ENCODE measurements at regions of chr16 and their contacts with region 1.

Region 1: DNA sequence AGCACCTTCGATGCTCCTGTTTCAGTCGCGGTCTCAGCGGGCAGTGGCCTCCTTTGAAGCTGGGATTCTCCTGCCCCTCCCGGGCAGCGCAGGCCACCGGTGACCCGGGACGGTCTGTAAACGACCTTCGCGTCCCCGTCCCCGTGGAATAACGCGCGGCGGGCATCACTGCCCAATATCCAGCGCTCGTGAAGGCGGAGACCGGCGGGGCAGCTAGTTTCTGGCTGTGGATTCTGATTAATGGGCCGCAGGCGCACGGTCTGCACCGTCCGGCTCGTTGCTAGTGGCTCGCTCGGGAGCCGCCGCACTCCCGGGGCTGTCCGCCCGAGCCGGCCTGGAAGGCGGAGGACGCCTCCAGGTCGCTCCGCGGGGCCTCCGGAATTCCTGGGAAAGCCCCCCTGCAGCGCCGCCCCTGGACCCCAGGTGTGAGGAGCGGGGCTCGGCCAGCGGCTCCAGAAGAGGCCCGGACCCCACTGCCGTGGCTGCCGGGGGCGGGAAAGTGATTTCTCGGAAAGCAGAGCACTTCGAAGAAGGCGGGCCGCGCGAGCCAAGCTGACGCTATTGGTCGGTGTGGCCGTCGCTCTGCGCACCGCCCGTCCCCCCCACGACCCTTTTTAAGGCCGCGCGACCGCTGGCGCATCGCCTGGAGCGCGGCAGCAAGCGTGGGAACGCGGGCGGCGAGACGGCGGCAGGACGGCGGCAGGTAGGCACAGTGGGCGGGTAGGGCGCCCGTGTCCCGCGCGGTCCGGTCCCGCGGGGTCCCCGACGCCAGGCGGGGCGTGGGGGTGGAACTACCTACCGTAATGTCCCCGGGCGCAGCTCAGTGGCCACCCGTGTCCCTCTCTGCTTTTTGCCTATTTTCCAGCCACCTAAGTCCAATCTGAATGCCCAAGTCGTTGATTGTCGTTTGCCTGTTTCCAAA is at the start of gene IRF8:
- DNase-seq: peak; percentile 76 to 83 (median 81)
- H3K4me3 ChIP-seq: peak within 1 kb of the TSS; percentile 72 to 98 (median 97)
- H3K4me3 Mint-ChIP-seq: peak within 1 kb of the TSS; percentile 91 to 96
- H3K27ac ChIP-seq: peak within 1 kb of the TSS; percentile 82 to 89
- H3K27ac Mint-ChIP-seq: peak within 1 kb of the TSS; percentile 92 to 97 (median 95)
- H3K4me1 ChIP-seq: peaks cover 50 to 59% of the 10 kb centered on the region in 2 donors
- H3K4me1 Mint-ChIP-seq: peaks cover 60% of the 10 kb centered on the region
- H3K27me3 ChIP-seq: no peaks in the 10 kb centered on the region
- H3K27me3 Mint-ChIP-seq: no peaks in the 10 kb centered on the region
- CTCF ChIP-seq: no peak
- polyA plus RNA-seq, gene IRF8: 157 to 187 (median 184) TPM

Region 2: GRCh38 chr16:85821441-85822135 is 77.2 kb before region 1 on chr16:
- intact Hi-C with region 1: loop called (anchors 5 kb)
- DNase-seq: peak; percentile 81 to 97 (median 85)
- H3K4me3 ChIP-seq: no peak overlapping the region
- H3K4me3 Mint-ChIP-seq: no peak overlapping the region
- H3K27ac ChIP-seq: no peak overlapping the region
- H3K27ac Mint-ChIP-seq: peak overlapping the region in 3 of 7 donors; percentile 3 to 76 (median 74)
- H3K4me1 ChIP-seq: peaks cover 18 to 22% of the 10 kb centered on the region in 2 donors
- H3K4me1 Mint-ChIP-seq: peaks cover 28% of the 10 kb centered on the region
- H3K27me3 ChIP-seq: peaks cover 0 to 2% of the 10 kb centered on the region in 2 donors
- H3K27me3 Mint-ChIP-seq: peaks cover 3 to 8% (median 3%) of the 10 kb centered on the region in 3 donors
- CTCF ChIP-seq: peak; percentile 99

Region 3: GRCh38 chr16:85853547-85854545 is 44.9 kb before region 1 on chr16:
- intact Hi-C with region 1: loop called (anchors 5 kb)
- DNase-seq: peak in 2 of 3 donors; percentile 63 to 76
- H3K4me3 ChIP-seq: peak overlapping the region in 2 of 3 experiments; percentile 10 to 58
- H3K4me3 Mint-ChIP-seq: peak overlapping the region; percentile 58 to 63
- H3K27ac ChIP-seq: peak overlapping the region; percentile 79 to 89
- H3K27ac Mint-ChIP-seq: peak overlapping the region; percentile 82 to 93 (median 89)
- H3K4me1 ChIP-seq: peaks cover 94 to 96% of the 10 kb centered on the region in 2 donors
- H3K4me1 Mint-ChIP-seq: peaks cover 89% of the 10 kb centered on the region
- H3K27me3 ChIP-seq: no peaks in the 10 kb centered on the region
- H3K27me3 Mint-ChIP-seq: peaks cover 1 to 3% (median 3%) of the 10 kb centered on the region in 3 donors
- CTCF ChIP-seq: no peak

Region 4: DNA sequence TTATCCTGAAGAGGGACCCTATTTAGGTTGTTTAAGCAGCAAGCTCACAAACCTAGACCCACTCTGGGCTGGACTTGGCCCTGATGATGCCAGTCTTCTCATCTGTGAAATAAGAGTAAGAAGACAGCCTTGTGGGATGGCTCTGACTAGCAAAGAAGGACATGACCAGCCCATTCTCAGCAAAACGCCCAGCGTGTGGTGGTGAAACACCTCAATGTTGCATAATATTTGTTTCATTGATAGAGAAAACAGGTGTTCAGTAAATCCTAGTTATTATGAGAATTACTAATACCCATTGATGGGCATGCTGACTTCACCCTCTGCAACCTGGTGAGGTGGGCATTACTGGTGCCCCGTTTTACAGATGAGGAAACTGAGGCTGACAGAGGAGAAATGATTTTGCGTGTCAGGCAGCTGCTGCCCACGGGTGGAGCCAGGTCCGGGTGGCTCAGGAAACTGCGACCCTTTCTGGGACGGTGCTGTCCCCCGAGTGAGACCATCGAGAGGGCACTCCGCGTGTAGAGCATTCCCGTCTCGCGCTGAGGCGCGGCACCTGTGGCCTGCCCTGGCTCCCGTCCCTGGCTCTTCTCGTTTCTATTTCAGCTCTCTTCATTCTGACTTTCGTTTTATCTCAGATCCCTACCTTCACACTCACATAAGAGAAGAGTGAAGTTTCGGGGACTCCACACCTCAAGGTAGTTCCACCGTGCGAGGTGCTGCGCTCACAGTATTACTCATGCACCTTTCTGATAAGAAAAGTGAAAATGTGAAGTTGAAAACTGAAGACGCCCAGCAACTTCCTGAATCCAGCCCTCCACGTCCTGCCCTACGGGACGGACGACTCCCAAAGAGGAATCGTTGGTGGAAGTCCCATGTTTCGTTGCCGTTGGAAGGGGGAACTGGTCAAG is 48.7 kb after region 1 on chr16:
- intact Hi-C with region 1: loop called in 1 of 2 experiments (anchors 5 kb)
- DNase-seq: peak in 2 of 3 donors; percentile 66 to 73
- H3K4me3 ChIP-seq: peak overlapping the region; percentile 36 to 80 (median 45)
- H3K4me3 Mint-ChIP-seq: peak overlapping the region; percentile 87 to 98
- H3K27ac ChIP-seq: no peak overlapping the region
- H3K27ac Mint-ChIP-seq: peak overlapping the region in 6 of 7 donors; percentile 35 to 77 (median 72)
- H3K4me1 ChIP-seq: peaks cover 43 to 51% of the 10 kb centered on the region in 2 donors
- H3K4me1 Mint-ChIP-seq: peaks cover 60% of the 10 kb centered on the region
- H3K27me3 ChIP-seq: no peaks in the 10 kb centered on the region
- H3K27me3 Mint-ChIP-seq: peaks cover 0 to 18% (median 5%) of the 10 kb centered on the region in 3 donors
- CTCF ChIP-seq: no peak

Region 5: GRCh38 chr16:85986931-85987749 is 88.4 kb after region 1 on chr16:
- intact Hi-C with region 1: loop called (anchors 2 to 10 kb)
- DNase-seq: peak in 2 of 3 donors; percentile 32 to 47
- H3K4me3 ChIP-seq: peak overlapping the region in 1 of 3 experiments; percentile 1
- H3K4me3 Mint-ChIP-seq: peak overlapping the region in 1 of 2 donors; percentile 12
- H3K27ac ChIP-seq: peak overlapping the region in 1 of 2 donors; percentile 3
- H3K27ac Mint-ChIP-seq: peak overlapping the region; percentile 9 to 99 (median 82)
- H3K4me1 ChIP-seq: peaks cover 54 to 56% of the 10 kb centered on the region in 2 donors
- H3K4me1 Mint-ChIP-seq: peaks cover 57% of the 10 kb centered on the region
- H3K27me3 ChIP-seq: no peaks in the 10 kb centered on the region
- H3K27me3 Mint-ChIP-seq: peaks cover 0 to 5% (median 3%) of the 10 kb centered on the region in 3 donors
- CTCF ChIP-seq: peak; percentile 74

Region 6: GRCh38 chr16:86016201-86016871 is 117.6 kb after region 1 on chr16:
- intact Hi-C with region 1: loop called in 1 of 2 experiments (anchors 5 kb)
- DNase-seq: peak; percentile 54 to 74 (median 70)
- H3K4me3 ChIP-seq: no peak overlapping the region
- H3K4me3 Mint-ChIP-seq: peak overlapping the region in 1 of 2 donors; percentile 43
- H3K27ac ChIP-seq: no peak overlapping the region
- H3K27ac Mint-ChIP-seq: peak overlapping the region in 4 of 7 donors; percentile 20 to 72 (median 54)
- H3K4me1 ChIP-seq: peaks cover 17 to 19% of the 10 kb centered on the region in 2 donors
- H3K4me1 Mint-ChIP-seq: peaks cover 25% of the 10 kb centered on the region
- H3K27me3 ChIP-seq: no peaks in the 10 kb centered on the region
- H3K27me3 Mint-ChIP-seq: peaks cover 9 to 24% (median 12%) of the 10 kb centered on the region in 3 donors
- CTCF ChIP-seq: peak; percentile 90